Cardiac septum (tissue), 1 donor: ENCODE measurements at regions of chr1 and their contacts with region 1.

Region 1: GRCh38 chr1:243343970-243344937 is 88.4 kb downstream of the SDCCAG8 start:
- DNase-seq: no peak

Region 2: DNA sequence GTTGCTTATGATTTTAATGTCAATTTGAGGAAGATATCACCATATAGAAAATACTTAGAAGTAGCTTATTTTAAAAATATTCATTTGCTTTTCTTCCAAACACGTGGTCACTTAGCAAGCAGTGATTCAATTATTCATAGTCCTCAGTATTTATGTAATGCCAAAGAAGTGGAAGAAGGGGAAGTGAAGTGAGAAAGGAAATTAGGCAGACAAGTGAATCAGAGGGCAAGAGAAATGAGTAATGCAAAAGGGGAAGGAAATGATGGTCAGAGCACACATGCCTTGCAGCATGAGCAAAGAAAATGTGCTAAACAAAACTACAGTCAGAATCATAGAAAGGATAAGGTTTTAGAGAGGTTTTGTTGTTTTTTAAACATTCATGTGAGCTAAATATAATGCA is 56.6 kb before region 1 on chr1:
- intact Hi-C with region 1: no loop called
- DNase-seq: no peak

Region 3: GRCh38 chr1:243438815-243439214 is 94.6 kb after region 1 on chr1:
- intact Hi-C with region 1: no loop called
- DNase-seq: no peak

Region 4: DNA sequence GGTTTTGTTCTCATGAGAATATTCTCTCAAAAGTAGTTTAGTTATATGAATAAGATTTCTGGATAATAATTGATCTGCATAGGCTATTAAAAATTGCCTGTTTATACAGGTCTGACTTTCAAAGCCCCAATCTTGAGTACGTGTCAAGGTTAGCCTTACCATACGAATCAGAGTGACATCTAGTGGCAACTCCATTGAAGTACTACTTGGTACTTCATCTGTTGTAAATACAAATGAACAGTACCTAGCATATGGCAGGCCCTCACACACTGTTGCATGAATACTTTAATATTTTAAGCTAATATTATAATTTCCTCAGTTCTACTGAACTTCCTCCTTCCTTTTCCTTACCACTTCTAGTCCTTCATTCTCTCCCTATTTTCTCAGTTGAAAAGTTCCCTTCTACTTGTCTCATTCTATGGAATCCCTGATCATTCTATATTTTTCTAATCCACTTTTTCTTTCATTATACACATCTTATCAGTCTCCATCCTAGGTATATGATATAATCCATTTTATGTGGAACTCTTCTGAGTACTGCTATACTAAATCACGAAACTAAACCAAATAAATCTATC is 404.5 kb after region 1 on chr1:
- intact Hi-C with region 1: loop called (anchors 5 kb)
- DNase-seq: no peak

Region 5: GRCh38 chr1:243946946-243947345 is 602.7 kb after region 1 on chr1:
- intact Hi-C with region 1: loop called (anchors 10 kb)
- DNase-seq: no peak

Region 6: GRCh38 chr1:244272471-244273261 is 928.4 kb after region 1 on chr1:
- intact Hi-C with region 1: loop called (anchors 2 kb)
- DNase-seq: no peak